ENCODE measurements at regions of chr7 and their contacts with region 1.

Region 1: GRCh38 chr7:130356121-130356875 is 11.7 kb downstream of the CPA5 start:
- DNase-seq: peak; percentile 68
- ATAC-seq: peak; percentile 78
- H3K4me3 ChIP-seq: peak overlapping the region in 1 of 2 experiments; percentile 7; a peak in 2 of 4 replicates
- H3K27ac ChIP-seq: peak overlapping the region; percentile 80
- H3K4me1 ChIP-seq: peaks cover 31 to 44% of the 10 kb centered on the region in 2 experiments
- H3K27me3 ChIP-seq: no peaks in the 10 kb centered on the region
- CTCF ChIP-seq: no peak
- POLR2A ChIP-seq: no peak
- RAD21 ChIP-seq: peak; percentile 31; the same call in 1 of the 2 replicates

Region 2: DNA sequence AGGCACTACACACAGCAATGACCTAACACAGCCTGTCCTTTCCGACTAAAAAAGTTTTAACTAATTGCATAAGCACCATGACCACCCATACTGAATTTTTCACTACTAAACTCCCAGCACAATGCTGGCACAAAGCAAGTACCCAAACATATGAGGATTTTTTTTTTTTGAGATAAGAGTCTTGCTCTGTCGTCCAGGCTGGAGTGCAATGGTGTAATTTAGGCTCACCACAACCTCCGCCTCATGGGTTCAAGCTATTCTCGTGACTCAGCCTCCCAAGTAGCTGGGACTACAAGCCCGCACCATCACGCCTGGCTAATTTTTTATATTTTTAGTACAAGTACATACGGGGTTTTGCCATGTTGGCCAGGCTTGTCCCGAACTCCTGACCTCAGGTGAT is 408.6 kb before region 1 on chr7:
- CTCF ChIA-PET with region 1: no interaction called
- POLR2A ChIA-PET with region 1: no interaction called
- RAD21 ChIA-PET with region 1: no interaction called
- intact Hi-C with region 1: no loop called
- DNase-seq: no peak
- ATAC-seq: no peak
- H3K4me3 ChIP-seq: no peak overlapping the region
- H3K27ac ChIP-seq: 0 out of 2 replicates have a peak overlapping the region, but pooled peaks have one; percentile 81
- H3K4me1 ChIP-seq: peaks cover 50 to 53% of the 10 kb centered on the region in 2 experiments
- H3K27me3 ChIP-seq: no peaks in the 10 kb centered on the region
- CTCF ChIP-seq: no peak
- POLR2A ChIP-seq: no peak
- RAD21 ChIP-seq: no peak

Region 3: DNA sequence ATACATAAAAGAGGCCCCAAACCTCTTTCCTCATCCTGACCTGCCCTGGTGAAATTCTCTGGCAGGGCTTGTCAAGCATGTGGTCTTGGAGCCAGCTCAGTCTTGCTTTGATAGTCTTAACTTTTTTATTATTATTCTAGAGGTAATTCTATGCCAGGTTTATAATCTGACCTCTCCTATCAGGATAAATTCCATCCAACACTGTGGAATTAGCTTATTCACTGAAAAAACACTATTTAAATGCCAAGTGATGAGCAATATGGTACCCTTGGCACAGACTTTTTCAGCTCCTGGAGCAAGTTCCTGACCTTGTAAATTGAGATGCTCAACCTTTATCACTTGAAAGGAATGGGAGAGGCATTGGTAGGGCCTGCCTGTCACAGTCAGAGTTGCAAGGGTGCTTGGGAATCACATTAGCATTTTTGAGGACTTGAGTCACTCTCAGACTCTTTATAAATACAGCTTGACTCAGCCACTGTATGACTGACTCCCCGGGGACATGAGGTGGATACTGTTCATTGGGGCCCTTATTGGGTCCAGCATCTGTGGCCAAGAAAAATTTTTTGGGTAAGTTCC is 63.5 kb before region 1 on chr7 and contains the start of gene CPA4:
- CTCF ChIA-PET with region 1: no interaction called
- POLR2A ChIA-PET with region 1: no interaction called
- RAD21 ChIA-PET with region 1: interaction called in 1 of 2 experiments, 3 read pairs
- intact Hi-C with region 1: loop called (anchors 5 kb)
- DNase-seq: peak; percentile 91
- ATAC-seq: peak; percentile 80
- H3K4me3 ChIP-seq: peak within 1 kb of the TSS in 1 of 2 experiments; percentile 14; a peak in 1 of 4 replicates
- H3K27ac ChIP-seq: peak within 1 kb of the TSS; percentile 69; the same call in 1 of the 2 replicates
- H3K4me1 ChIP-seq: peaks cover 41 to 76% of the 10 kb centered on the region in 2 experiments
- H3K27me3 ChIP-seq: no peaks in the 10 kb centered on the region
- CTCF ChIP-seq: no peak
- POLR2A ChIP-seq: no peak
- RAD21 ChIP-seq: no peak
- total RNA-seq, gene CPA4: 38.7 TPM

Region 4: GRCh38 chr7:130305433-130306042 is 50.8 kb before region 1 on chr7:
- CTCF ChIA-PET with region 1: no interaction called
- POLR2A ChIA-PET with region 1: no interaction called
- RAD21 ChIA-PET with region 1: no interaction called
- intact Hi-C with region 1: no loop called
- DNase-seq: no peak
- ATAC-seq: no peak
- H3K4me3 ChIP-seq: no peak overlapping the region
- H3K27ac ChIP-seq: no peak overlapping the region
- H3K4me1 ChIP-seq: no peaks in the 10 kb centered on the region
- H3K27me3 ChIP-seq: no peaks in the 10 kb centered on the region
- CTCF ChIP-seq: no peak
- POLR2A ChIP-seq: no peak
- RAD21 ChIP-seq: no peak